PC-9 (cell line): ENCODE measurements at regions of chr14 and their contacts with region 1.

Region 1: GRCh38 chr14:34098045-34098984 is 147.4 kb upstream of the EGLN3 start:
- DNase-seq: peak; percentile 43 to 75
- H3K4me3 ChIP-seq: no peak overlapping the region
- H3K27ac ChIP-seq: no peak overlapping the region
- H3K4me1 ChIP-seq: peaks cover 29% of the 10 kb centered on the region
- H3K27me3 ChIP-seq: no peaks in the 10 kb centered on the region
- CTCF ChIP-seq: peak; percentile 75

Region 2: GRCh38 chr14:33839193-33840076 is 258.9 kb before region 1 on chr14:
- CTCF ChIA-PET with region 1: interaction called, 4 read pairs
- POLR2A ChIA-PET with region 1: no interaction called
- intact Hi-C with region 1: loop called (anchors 1 kb)
- DNase-seq: peak in 1 of 2 experiments; percentile 11
- H3K4me3 ChIP-seq: no peak overlapping the region
- H3K27ac ChIP-seq: no peak overlapping the region
- H3K4me1 ChIP-seq: peaks cover 30% of the 10 kb centered on the region
- H3K27me3 ChIP-seq: no peaks in the 10 kb centered on the region
- CTCF ChIP-seq: peak; percentile 81